ENCODE measurements at regions of chr11 and their contacts with region 1.

Region 1: GRCh38 chr11:110349138-110349996 is 53.0 kb upstream of the RDX start:
- DNase-seq: peak; percentile 91
- H3K4me3 Mint-ChIP-seq: peak overlapping the region; percentile 14
- H3K27ac Mint-ChIP-seq: peak overlapping the region; percentile 97
- H3K4me1 Mint-ChIP-seq: peaks cover 67% of the 10 kb centered on the region
- H3K27me3 Mint-ChIP-seq: no peaks in the 10 kb centered on the region

Region 2: DNA sequence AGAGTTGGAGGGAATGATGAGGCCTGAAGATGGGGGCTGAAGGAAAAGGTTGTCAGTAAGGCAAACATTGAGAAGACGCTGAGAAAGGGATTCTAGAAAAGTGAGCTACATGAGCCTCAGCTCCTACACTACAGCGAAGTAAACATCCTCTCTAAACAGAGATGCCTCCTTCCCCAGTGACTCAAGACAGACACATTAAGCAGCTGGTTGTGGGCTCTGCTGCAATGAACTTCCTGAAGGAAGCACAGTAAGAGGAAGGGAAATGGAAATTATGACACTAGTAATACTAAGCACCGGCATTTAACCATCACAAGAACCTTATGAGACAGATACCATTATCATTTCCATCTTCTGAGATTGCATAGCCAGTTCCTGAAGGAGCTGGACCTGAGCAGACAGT is 736.9 kb before region 1 on chr11:
- CTCF ChIA-PET with region 1: no interaction called
- intact Hi-C with region 1: no loop called
- DNase-seq: no peak
- H3K4me3 Mint-ChIP-seq: no peak overlapping the region
- H3K27ac Mint-ChIP-seq: no peak overlapping the region
- H3K4me1 Mint-ChIP-seq: no peaks in the 10 kb centered on the region
- H3K27me3 Mint-ChIP-seq: no peaks in the 10 kb centered on the region

Region 3: GRCh38 chr11:110113505-110113904 is 235.9 kb before region 1 on chr11:
- CTCF ChIA-PET with region 1: no interaction called
- intact Hi-C with region 1: no loop called
- DNase-seq: no peak
- H3K4me3 Mint-ChIP-seq: no peak overlapping the region
- H3K27ac Mint-ChIP-seq: no peak overlapping the region
- H3K4me1 Mint-ChIP-seq: no peaks in the 10 kb centered on the region
- H3K27me3 Mint-ChIP-seq: peaks cover 7% of the 10 kb centered on the region

Region 4: GRCh38 chr11:110296226-110297075 is 52.9 kb before region 1 on chr11 and contains the start of gene RDX:
- CTCF ChIA-PET with region 1: interaction called, 5 read pairs
- intact Hi-C with region 1: loop called (anchors 1 kb)
- DNase-seq: peak; percentile 53
- H3K4me3 Mint-ChIP-seq: peak within 1 kb of the TSS; percentile 91
- H3K27ac Mint-ChIP-seq: peak within 1 kb of the TSS; percentile 83
- H3K4me1 Mint-ChIP-seq: peaks cover 39% of the 10 kb centered on the region
- H3K27me3 Mint-ChIP-seq: no peaks in the 10 kb centered on the region
- total RNA-seq, gene RDX: 35.2 to 37.4 TPM

Region 5: DNA sequence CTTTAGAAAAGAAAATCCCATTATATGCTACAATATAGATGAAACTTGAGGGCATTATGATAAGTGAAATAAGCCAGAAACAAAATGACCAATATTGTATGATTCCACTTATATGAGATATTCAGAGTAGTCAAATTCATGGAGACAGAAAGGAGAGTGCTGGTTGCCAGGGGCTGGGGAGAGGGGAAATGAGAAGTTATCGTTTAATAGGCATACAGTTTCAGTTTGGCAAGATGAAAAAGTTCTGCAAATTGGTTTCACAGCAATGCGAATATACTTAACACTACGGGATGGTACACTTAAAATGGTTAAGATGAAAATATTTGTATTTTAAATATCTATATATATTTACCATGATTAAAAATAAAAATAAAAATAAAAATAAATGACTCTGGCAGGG is 21.9 kb before region 1 on chr11:
- CTCF ChIA-PET with region 1: interaction called, 3 read pairs
- intact Hi-C with region 1: loop called (anchors 1 kb)
- DNase-seq: no peak
- H3K4me3 Mint-ChIP-seq: peak overlapping the region; percentile 81
- H3K27ac Mint-ChIP-seq: peak overlapping the region; percentile 65
- H3K4me1 Mint-ChIP-seq: peaks cover 18% of the 10 kb centered on the region
- H3K27me3 Mint-ChIP-seq: peaks cover under 1% of the 10 kb centered on the region

Region 6: DNA sequence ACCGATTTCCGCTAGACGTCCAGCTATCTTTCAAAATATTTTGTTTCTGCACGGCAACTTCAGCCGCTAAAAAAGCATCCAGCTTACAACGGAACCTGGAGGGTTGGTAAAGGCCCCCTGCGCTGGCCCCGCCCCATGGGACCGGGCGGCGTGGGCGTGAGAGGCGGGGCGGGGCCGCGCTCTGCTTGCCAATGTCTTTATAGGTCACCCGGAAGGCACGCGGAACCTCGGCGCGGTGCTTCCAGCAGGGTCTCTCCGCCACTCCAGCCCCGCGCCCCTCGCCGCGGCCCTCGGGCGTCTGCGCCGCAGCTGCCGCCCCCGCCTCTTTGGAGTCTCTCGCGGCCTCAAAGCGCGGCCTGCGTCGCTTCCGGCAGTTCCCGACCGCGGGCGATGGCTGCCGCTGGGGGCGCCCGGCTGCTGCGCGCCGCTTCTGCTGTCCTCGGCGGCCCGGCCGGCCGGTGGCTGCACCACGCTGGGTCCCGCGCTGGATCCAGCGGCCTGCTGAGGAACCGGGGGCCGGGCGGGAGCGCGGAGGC is 80.4 kb after region 1 on chr11 and contains the start of gene FDX1:
- CTCF ChIA-PET with region 1: interaction called, 7 read pairs
- intact Hi-C with region 1: loop called (anchors 1 kb)
- DNase-seq: peak; percentile 86
- H3K4me3 Mint-ChIP-seq: peak within 1 kb of the TSS; percentile 98
- H3K27ac Mint-ChIP-seq: peak within 1 kb of the TSS; percentile 93
- H3K4me1 Mint-ChIP-seq: peaks cover 40% of the 10 kb centered on the region
- H3K27me3 Mint-ChIP-seq: no peaks in the 10 kb centered on the region
- total RNA-seq, gene FDX1: 12.3 to 13.4 TPM

Region 7: GRCh38 chr11:110907629-110908028 is 558.3 kb after region 1 on chr11:
- CTCF ChIA-PET with region 1: no interaction called
- intact Hi-C with region 1: loop called (anchors 2 kb)
- DNase-seq: peak; percentile 32
- H3K4me3 Mint-ChIP-seq: no peak overlapping the region
- H3K27ac Mint-ChIP-seq: peak overlapping the region; percentile 48
- H3K4me1 Mint-ChIP-seq: peaks cover 29% of the 10 kb centered on the region
- H3K27me3 Mint-ChIP-seq: no peaks in the 10 kb centered on the region

Region 8: DNA sequence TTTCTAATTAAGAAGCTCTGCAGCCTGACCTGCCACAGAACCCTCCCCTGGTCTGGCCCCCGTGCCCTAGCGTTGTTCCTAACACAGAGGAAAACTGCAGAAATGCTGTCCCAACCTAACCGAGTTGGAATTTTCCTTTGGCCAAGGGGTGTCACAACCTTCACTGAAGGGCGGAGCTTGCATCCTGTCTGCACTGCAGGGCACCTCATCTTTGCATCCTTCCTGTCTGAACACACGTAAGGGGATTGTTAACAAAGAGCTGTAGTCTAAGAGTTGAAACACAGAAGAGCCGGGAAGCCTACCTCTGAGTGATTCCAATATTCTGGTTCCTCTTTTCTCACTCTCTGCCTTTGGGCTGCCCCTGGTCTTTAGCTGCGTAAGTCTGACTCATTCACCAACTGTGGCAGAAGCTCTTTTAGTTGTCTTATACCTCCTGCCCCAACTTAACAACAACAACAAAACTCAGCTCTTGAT is 1589.4 kb after region 1 on chr11:
- CTCF ChIA-PET with region 1: no interaction called
- intact Hi-C with region 1: loop called (anchors 10 kb)
- DNase-seq: peak; percentile 75
- H3K4me3 Mint-ChIP-seq: peak overlapping the region; percentile 76
- H3K27ac Mint-ChIP-seq: peak overlapping the region; percentile 84
- H3K4me1 Mint-ChIP-seq: peaks cover 43% of the 10 kb centered on the region
- H3K27me3 Mint-ChIP-seq: no peaks in the 10 kb centered on the region

Measured in activated naive CD4-positive, alpha-beta T cell treated with anti-CD3 and anti-CD28 coated beads for 36 hours (primary cell).